B cell (primary cell): ENCODE measurements at regions of chr3 and their contacts with region 1.

Region 1: DNA sequence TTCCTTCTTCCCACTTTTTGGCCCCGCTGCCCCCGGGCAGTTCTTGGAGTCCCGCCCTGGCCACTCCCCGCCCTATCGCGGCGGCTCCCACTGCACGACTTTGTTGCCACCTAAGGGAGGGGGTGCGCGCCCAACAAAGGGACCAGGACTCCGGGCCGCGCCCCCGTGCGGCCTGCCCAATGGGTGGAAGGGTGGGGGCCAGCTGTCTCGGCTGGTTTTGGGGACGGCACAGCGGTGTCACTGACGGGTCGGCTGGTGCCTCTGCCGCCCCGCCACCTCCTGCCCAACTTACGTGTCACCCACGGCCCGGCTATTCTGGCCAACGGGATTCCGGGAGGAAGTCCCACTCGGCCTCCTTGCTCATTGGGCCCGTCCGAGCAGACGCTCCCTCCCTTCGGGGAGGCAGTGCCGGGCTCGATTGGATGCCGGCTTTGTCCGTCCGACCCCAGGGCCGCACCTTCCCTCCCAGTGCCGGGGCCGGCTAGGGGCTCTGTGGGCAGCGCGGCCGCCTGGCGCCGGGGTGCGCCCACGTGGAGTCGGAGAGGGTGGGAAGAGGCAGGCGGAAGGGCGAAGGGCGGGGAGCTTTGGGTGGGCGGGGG is at the start of gene GOLIM4:
- DNase-seq: peak; percentile 90
- ATAC-seq: peak; percentile 77
- H3K4me3 ChIP-seq: peak within 1 kb of the TSS; percentile 56 to 82 (median 73)
- H3K4me3 Mint-ChIP-seq: peak within 1 kb of the TSS; percentile 100
- H3K27ac ChIP-seq: peak within 1 kb of the TSS; percentile 38 to 76
- H3K27ac Mint-ChIP-seq: peak within 1 kb of the TSS; percentile 97
- H3K4me1 ChIP-seq: peaks cover 9 to 11% of the 10 kb centered on the region in 2 donors
- H3K4me1 Mint-ChIP-seq: peaks cover 20% of the 10 kb centered on the region
- H3K27me3 ChIP-seq: no peaks in the 10 kb centered on the region
- H3K27me3 Mint-ChIP-seq: no peaks in the 10 kb centered on the region
- CTCF ChIP-seq: no peak
- total RNA-seq, gene GOLIM4: 9.3 and 10.5 TPM in 2 replicates

Region 2: GRCh38 chr3:167750272-167750971 is 345.3 kb before region 1 on chr3:
- CTCF ChIA-PET with region 1: no interaction called
- POLR2A ChIA-PET with region 1: no interaction called
- intact Hi-C with region 1: loop called (anchors 5 kb)
- DNase-seq: peak; percentile 83
- ATAC-seq: peak; percentile 87
- H3K4me3 ChIP-seq: peak overlapping the region in 3 of 5 experiments; percentile 13 to 45 (median 15)
- H3K4me3 Mint-ChIP-seq: peak overlapping the region; percentile 84
- H3K27ac ChIP-seq: peak overlapping the region; percentile 73 to 83
- H3K27ac Mint-ChIP-seq: peak overlapping the region; percentile 95
- H3K4me1 ChIP-seq: peaks cover 35 to 66% of the 10 kb centered on the region in 2 donors
- H3K4me1 Mint-ChIP-seq: peaks cover 77% of the 10 kb centered on the region
- H3K27me3 ChIP-seq: no peaks in the 10 kb centered on the region
- H3K27me3 Mint-ChIP-seq: no peaks in the 10 kb centered on the region
- CTCF ChIP-seq: no peak

Region 3: DNA sequence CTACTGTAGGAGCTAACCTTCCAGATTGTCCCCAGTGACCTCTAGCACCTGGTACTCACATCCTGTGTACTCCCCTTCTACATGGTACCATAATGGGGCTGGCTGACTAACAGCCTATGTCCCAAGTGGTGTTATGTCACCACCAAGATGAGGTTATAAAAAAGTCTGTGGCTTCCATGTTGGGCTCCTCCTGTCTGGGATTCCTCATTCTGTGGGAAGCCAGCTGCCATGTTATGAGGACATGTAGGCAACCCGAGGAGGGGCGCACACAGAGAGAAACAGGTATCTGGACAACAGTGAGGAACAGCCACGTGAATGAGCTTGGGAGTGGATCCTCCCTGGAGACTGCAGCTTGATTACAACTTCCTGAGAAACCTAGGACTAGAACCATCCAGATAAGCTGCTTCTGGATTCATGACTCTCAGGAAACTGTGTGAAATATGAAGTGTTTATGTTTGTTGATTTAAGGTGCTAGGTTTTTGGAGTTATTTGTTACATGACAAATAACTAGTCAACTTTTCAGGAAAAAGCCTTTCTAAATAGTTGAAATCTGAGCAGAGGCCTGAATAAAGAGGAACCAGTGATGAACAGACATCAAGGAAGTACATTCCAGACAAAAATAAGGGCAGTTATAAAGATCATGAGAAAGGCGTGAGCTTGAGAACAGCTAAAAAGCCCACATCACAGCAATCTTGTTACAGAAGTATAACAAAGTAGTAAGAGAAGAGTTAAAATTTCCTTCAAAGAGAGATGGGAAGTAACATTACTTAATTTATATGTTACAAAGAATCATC is 21.7 kb before region 1 on chr3:
- CTCF ChIA-PET with region 1: no interaction called
- POLR2A ChIA-PET with region 1: no interaction called
- intact Hi-C with region 1: no loop called
- DNase-seq: no peak
- ATAC-seq: no peak
- H3K4me3 ChIP-seq: no peak overlapping the region
- H3K4me3 Mint-ChIP-seq: no peak overlapping the region
- H3K27ac ChIP-seq: no peak overlapping the region
- H3K27ac Mint-ChIP-seq: no peak overlapping the region
- H3K4me1 ChIP-seq: no peaks in the 10 kb centered on the region
- H3K4me1 Mint-ChIP-seq: no peaks in the 10 kb centered on the region
- H3K27me3 ChIP-seq: no peaks in the 10 kb centered on the region
- H3K27me3 Mint-ChIP-seq: no peaks in the 10 kb centered on the region
- CTCF ChIP-seq: no peak

Region 4: DNA sequence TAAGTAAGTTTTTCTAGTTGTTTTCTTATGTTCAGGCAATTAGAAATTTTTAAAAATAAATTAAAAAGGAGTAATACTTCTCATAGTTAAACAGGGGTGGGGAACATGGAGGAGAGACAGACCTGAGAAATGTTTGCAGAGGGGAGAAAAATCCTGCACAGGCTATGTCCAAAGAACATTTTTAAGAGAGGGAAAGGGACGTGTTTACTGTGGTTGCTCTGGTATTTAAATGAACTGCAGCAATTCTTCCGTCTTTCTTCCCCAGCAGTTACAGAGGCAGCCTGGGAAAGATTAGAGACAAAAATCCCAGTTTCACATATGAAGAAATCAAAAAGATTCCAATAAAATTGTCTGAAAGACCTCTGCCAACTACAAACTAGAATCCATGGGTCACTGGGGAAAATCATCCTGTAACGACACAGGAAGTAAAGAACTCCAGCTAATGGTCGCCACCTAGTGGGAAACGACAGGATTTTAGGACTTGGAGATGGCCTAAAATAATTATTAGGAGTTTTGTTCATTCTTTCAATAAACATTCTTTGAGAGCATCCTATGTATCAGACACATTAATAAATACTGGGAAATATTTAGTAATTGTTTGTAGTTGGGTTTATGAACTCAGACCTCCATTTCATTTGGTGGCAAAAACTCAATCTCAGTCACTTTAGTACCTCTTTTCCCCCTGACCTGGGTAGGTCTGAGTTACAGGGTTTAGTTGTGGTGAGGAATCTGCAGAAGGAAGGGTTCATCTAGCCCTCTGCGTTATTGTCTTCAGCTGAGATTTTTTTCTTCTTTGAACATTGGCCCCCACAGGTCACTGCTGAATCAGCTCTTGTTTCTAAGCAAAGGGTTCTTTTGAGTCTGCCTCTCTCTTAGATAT is 69.9 kb after region 1 on chr3:
- CTCF ChIA-PET with region 1: interaction called, 4 read pairs
- POLR2A ChIA-PET with region 1: no interaction called
- intact Hi-C with region 1: loop called (anchors 1 kb)
- DNase-seq: peak; percentile 66
- ATAC-seq: no peak
- H3K4me3 ChIP-seq: peak overlapping the region in 2 of 5 experiments; percentile 22 to 41
- H3K4me3 Mint-ChIP-seq: peak overlapping the region; percentile 35
- H3K27ac ChIP-seq: no peak overlapping the region
- H3K27ac Mint-ChIP-seq: no peak overlapping the region
- H3K4me1 ChIP-seq: peaks cover 0 to 4% of the 10 kb centered on the region in 2 donors
- H3K4me1 Mint-ChIP-seq: peaks cover 4% of the 10 kb centered on the region
- H3K27me3 ChIP-seq: no peaks in the 10 kb centered on the region
- H3K27me3 Mint-ChIP-seq: peaks cover 2% of the 10 kb centered on the region
- CTCF ChIP-seq: peak; percentile 75

Region 5: GRCh38 chr3:168260859-168261258 is 165.1 kb after region 1 on chr3:
- CTCF ChIA-PET with region 1: no interaction called
- POLR2A ChIA-PET with region 1: no interaction called
- intact Hi-C with region 1: no loop called
- DNase-seq: no peak
- ATAC-seq: no peak
- H3K4me3 ChIP-seq: no peak overlapping the region
- H3K4me3 Mint-ChIP-seq: no peak overlapping the region
- H3K27ac ChIP-seq: no peak overlapping the region
- H3K27ac Mint-ChIP-seq: no peak overlapping the region
- H3K4me1 ChIP-seq: no peaks in the 10 kb centered on the region
- H3K4me1 Mint-ChIP-seq: no peaks in the 10 kb centered on the region
- H3K27me3 ChIP-seq: no peaks in the 10 kb centered on the region
- H3K27me3 Mint-ChIP-seq: peaks cover 12% of the 10 kb centered on the region
- CTCF ChIP-seq: no peak